ENCODE measurements at regions of chr7 and their contacts with region 1.

Region 1: GRCh38 chr7:56063882-56064625 is at the start of gene SUMF2:
- DNase-seq: peak; percentile 88
- ATAC-seq: peak; percentile 93
- H3K4me3 Mint-ChIP-seq: peak within 1 kb of the TSS; percentile 91
- H3K27ac Mint-ChIP-seq: peak within 1 kb of the TSS; percentile 95
- H3K4me1 Mint-ChIP-seq: peaks cover 38% of the 10 kb centered on the region
- H3K27me3 Mint-ChIP-seq: no peaks in the 10 kb centered on the region
- total RNA-seq, gene SUMF2: 121 to 124 TPM

Region 2: GRCh38 chr7:55903985-55904759 is 159.9 kb before region 1 on chr7:
- CTCF ChIA-PET with region 1: no interaction called
- POLR2A ChIA-PET with region 1: no interaction called
- DNase-seq: no peak
- ATAC-seq: no peak
- H3K4me3 Mint-ChIP-seq: no peak overlapping the region
- H3K27ac Mint-ChIP-seq: no peak overlapping the region
- H3K4me1 Mint-ChIP-seq: no peaks in the 10 kb centered on the region
- H3K27me3 Mint-ChIP-seq: no peaks in the 10 kb centered on the region

Region 3: GRCh38 chr7:56051339-56052191 is 12.5 kb before region 1 on chr7 and contains the starts of genes CCT6A and PSPH:
- CTCF ChIA-PET with region 1: interaction called, 9 read pairs
- POLR2A ChIA-PET with region 1: interaction called, 27 read pairs
- DNase-seq: peak; percentile 93
- ATAC-seq: peak; percentile 94
- H3K4me3 Mint-ChIP-seq: peak within 1 kb of the TSS; percentile 97
- H3K27ac Mint-ChIP-seq: peak within 1 kb of the TSS; percentile 94
- H3K4me1 Mint-ChIP-seq: peaks cover 46% of the 10 kb centered on the region
- H3K27me3 Mint-ChIP-seq: no peaks in the 10 kb centered on the region
- total RNA-seq, gene CCT6A: 157 to 170 TPM
- total RNA-seq, gene PSPH: 14.6 to 16.8 TPM

Region 4: GRCh38 chr7:56106108-56107073 is 42.3 kb after region 1 on chr7 and contains the start of gene CHCHD2:
- CTCF ChIA-PET with region 1: interaction called, 4 read pairs
- POLR2A ChIA-PET with region 1: interaction called, 29 read pairs
- DNase-seq: peak; percentile 97
- ATAC-seq: peak; percentile 99
- H3K4me3 Mint-ChIP-seq: peak within 1 kb of the TSS; percentile 99
- H3K27ac Mint-ChIP-seq: peak within 1 kb of the TSS; percentile 99
- H3K4me1 Mint-ChIP-seq: peaks cover 36% of the 10 kb centered on the region
- H3K27me3 Mint-ChIP-seq: no peaks in the 10 kb centered on the region
- total RNA-seq, gene CHCHD2: 526 to 534 TPM

Measured in activated CD8-positive, alpha-beta T cell treated with anti-CD3 and anti-CD28 coated beads, Interleukin-2, amount 10 ng/mL, durations not matched to agents 7 days and 5 days (primary cell).